MCF 10A (cell line): ENCODE measurements at regions of chr4 and their contacts with region 1.

Region 1: DNA sequence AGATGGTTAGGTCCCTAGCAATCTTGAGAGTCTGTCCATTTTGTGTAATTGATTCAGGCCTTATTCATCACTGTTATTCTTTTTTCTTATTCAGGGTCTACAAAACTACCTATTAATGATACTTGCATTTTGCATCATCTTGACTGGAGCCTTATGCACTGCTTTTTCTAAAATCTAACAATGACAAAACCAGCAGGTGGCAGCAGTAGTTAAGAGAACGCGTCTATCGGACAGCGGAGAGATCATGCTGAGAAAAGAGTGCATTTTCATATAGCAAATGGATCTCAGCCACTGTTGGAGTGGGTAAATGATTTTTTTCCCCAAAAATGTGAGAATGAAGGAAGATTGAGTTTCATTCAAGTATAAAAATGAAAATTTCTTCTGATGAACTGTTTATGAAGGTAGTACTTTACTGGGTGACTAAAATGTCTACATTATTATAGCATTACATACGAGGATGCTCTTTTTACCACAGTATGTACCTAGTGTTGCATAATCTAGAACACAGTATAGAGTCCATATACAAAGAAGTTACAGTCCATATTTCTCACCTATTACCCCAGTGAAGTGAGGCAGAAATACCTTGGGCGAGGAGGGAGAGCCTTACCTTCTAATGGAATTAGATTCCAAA is 43.2 kb downstream of the TMEM144 start:
- DNase-seq: peak; percentile 72
- H3K4me3 Mint-ChIP-seq: no peak overlapping the region
- H3K27ac Mint-ChIP-seq: no peak overlapping the region
- H3K4me1 Mint-ChIP-seq: no peaks in the 10 kb centered on the region
- H3K27me3 Mint-ChIP-seq: no peaks in the 10 kb centered on the region
- CTCF ChIP-seq: peak; percentile 62

Region 2: GRCh38 chr4:157992038-157992705 is 261.3 kb before region 1 on chr4:
- CTCF ChIA-PET with region 1: interaction called, 6 read pairs
- POLR2A ChIA-PET with region 1: no interaction called
- intact Hi-C with region 1: loop called (anchors 1 kb)
- DNase-seq: peak; percentile 79
- H3K4me3 Mint-ChIP-seq: no peak overlapping the region
- H3K27ac Mint-ChIP-seq: no peak overlapping the region
- H3K4me1 Mint-ChIP-seq: no peaks in the 10 kb centered on the region
- H3K27me3 Mint-ChIP-seq: no peaks in the 10 kb centered on the region
- CTCF ChIP-seq: peak; percentile 72

Region 3: GRCh38 chr4:158193171-158193749 is 60.2 kb before region 1 on chr4:
- CTCF ChIA-PET with region 1: interaction called, 56 read pairs
- POLR2A ChIA-PET with region 1: no interaction called
- intact Hi-C with region 1: loop called (anchors 1 kb)
- DNase-seq: peak; percentile 60
- H3K4me3 Mint-ChIP-seq: no peak overlapping the region
- H3K27ac Mint-ChIP-seq: no peak overlapping the region
- H3K4me1 Mint-ChIP-seq: no peaks in the 10 kb centered on the region
- H3K27me3 Mint-ChIP-seq: no peaks in the 10 kb centered on the region
- CTCF ChIP-seq: peak; percentile 51

Region 4: GRCh38 chr4:158238575-158238974 is 14.9 kb before region 1 on chr4:
- CTCF ChIA-PET with region 1: interaction called, 12 read pairs
- POLR2A ChIA-PET with region 1: no interaction called
- intact Hi-C with region 1: no loop called
- DNase-seq: no peak
- H3K4me3 Mint-ChIP-seq: no peak overlapping the region
- H3K27ac Mint-ChIP-seq: no peak overlapping the region
- H3K4me1 Mint-ChIP-seq: no peaks in the 10 kb centered on the region
- H3K27me3 Mint-ChIP-seq: no peaks in the 10 kb centered on the region
- CTCF ChIP-seq: no peak

Region 5: GRCh38 chr4:158282252-158282651 is 28.8 kb after region 1 on chr4:
- CTCF ChIA-PET with region 1: no interaction called
- POLR2A ChIA-PET with region 1: no interaction called
- intact Hi-C with region 1: no loop called
- DNase-seq: peak; percentile 40
- H3K4me3 Mint-ChIP-seq: no peak overlapping the region
- H3K27ac Mint-ChIP-seq: peak overlapping the region; percentile 83
- H3K4me1 Mint-ChIP-seq: peaks cover 6% of the 10 kb centered on the region
- H3K27me3 Mint-ChIP-seq: no peaks in the 10 kb centered on the region
- CTCF ChIP-seq: no peak

Region 6: GRCh38 chr4:158671915-158672806 is 418.7 kb after region 1 on chr4 and contains the start of gene ETFDH:
- CTCF ChIA-PET with region 1: interaction called, 3 read pairs
- POLR2A ChIA-PET with region 1: no interaction called
- intact Hi-C with region 1: loop called (anchors 2 kb)
- DNase-seq: peak; percentile 99
- H3K4me3 Mint-ChIP-seq: peak within 1 kb of the TSS; percentile 95
- H3K27ac Mint-ChIP-seq: peak within 1 kb of the TSS; percentile 96
- H3K4me1 Mint-ChIP-seq: peaks cover 8% of the 10 kb centered on the region
- H3K27me3 Mint-ChIP-seq: no peaks in the 10 kb centered on the region
- CTCF ChIP-seq: peak; percentile 25
- total RNA-seq, gene ETFDH: 15.8 and 19.2 TPM in 2 replicates